MCF 10A (cell line): ENCODE measurements at regions of chr10 and their contacts with region 1.

Region 1: DNA sequence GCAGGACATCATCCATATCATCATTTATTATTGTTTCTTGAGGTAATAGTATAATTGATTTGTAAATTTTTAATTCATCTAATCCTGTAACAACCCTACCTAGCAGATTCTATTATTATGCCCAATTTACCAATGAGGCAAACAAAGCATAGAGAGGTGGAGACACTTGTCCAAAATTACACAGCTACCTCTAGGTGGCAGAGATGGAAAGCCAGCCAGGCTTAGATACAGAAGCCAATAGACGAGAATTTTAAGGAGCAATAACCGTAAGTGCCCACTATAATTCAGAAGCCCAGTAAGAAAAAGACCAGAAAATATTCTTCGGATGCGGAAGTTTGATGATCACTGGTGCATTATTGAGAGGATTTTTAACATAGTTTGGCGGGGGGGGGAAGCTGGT is 54.0 kb downstream of the ANK3 start:
- DNase-seq: peak; percentile 47
- H3K4me3 Mint-ChIP-seq: no peak overlapping the region
- H3K27ac Mint-ChIP-seq: peak overlapping the region; percentile 10
- H3K4me1 Mint-ChIP-seq: no peaks in the 10 kb centered on the region
- H3K27me3 Mint-ChIP-seq: no peaks in the 10 kb centered on the region
- CTCF ChIP-seq: peak; percentile 36

Region 2: DNA sequence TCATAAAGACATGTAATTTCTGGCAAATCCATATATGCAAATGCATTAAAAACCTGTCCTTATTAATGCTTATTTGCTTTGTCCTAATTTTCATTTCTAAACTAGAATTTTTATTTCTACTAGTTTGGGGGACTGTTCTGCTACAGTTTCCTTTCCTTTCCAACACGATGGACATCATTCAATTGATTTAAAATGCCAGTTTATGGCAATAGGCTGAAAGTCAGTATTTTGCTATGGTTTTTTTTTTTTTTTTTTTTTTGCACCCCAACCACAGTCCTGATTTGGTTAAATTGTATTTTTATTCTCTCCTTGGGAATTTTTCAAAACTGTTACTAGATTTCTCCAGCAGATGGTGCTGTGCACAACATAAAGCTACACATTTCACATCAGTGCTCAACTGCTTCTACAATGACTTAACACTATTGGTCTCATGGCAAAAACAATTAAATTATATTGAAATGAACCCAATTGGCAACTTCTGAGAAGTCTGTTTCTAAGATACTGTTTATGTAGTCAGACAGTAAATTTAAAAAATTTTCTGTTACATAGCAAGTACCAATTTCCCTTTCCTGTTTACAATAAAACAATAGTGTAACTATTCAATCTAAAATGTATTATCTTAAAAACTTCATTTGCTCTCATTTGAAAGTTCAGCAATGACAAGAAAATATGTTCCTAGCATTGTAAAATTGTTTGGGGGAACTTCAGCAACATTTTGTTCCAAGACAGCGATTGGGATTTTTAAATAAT is 235.5 kb before region 1 on chr10:
- CTCF ChIA-PET with region 1: no interaction called
- POLR2A ChIA-PET with region 1: no interaction called
- intact Hi-C with region 1: loop called (anchors 5 kb)
- DNase-seq: peak; percentile 63
- H3K4me3 Mint-ChIP-seq: no peak overlapping the region
- H3K27ac Mint-ChIP-seq: no peak overlapping the region
- H3K4me1 Mint-ChIP-seq: no peaks in the 10 kb centered on the region
- H3K27me3 Mint-ChIP-seq: no peaks in the 10 kb centered on the region
- CTCF ChIP-seq: peak; percentile 57